ENCODE measurements at regions of chr5 and their contacts with region 1.

Region 1: DNA sequence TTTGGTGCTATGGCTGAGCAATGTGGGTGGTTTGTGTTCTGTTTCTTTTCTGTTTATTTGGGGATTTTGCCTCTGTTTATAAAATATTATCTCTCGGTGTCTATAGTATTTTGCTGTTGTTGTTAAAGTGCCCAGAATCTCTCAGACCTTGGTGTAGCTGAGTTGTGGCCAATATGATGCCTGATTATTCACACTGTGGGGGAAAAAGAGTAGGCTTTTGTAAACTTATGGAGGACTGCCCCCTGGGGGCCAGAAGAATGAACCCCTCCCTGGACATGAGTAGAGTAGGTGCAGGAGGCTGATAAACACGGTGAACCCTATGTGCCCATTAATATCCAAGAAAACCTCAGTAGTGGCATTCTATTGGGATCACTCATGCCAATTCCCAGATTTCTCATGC is 49.0 kb upstream of the DPYSL3 start:
- DNase-seq: peak; percentile 61
- H3K4me3 ChIP-seq: no peak overlapping the region
- H3K27ac ChIP-seq: no peak overlapping the region
- H3K27me3 ChIP-seq: no peaks in the 10 kb centered on the region
- CTCF ChIP-seq: peak; percentile 84

Region 2: DNA sequence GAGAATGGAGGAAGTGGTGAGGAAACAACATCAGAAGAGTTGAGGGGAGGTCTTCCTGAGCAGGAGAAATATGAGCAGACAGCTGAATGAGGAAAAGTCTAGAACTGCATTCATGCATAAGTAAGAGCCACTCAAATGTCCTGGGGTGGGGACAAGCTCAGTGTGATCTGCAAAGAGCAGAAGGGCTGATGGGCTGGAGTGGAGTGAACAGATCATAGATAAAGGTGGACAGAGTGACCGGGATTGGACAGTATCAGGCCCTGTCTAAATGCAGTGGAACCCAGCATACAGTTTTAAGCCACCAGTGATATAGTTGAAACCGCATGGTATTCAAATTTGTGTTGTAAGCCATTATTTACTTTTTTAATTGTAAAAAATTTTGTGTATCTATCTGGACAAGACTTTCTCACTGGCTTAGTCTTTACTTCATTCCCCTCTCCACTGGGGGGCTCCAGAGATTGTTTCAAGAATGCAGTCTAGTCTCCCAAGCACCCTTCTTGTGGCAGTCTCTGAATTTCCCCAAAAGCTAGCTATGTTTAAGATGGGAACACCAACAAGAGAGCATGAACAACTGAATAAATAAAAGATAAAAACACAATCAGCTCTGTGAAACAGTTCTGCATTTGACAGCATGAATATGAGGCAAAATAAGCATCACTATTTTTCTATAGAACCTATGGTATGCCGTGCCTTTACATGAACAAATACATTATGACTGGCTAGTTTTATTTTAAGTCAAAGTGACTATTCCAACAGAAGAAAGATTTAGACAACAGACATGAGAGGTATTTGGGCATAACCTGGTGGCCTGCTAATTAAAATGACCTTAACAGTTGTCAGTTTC is 334.7 kb before region 1 on chr5:
- CTCF ChIA-PET with region 1: interaction called, 31 read pairs
- POLR2A ChIA-PET with region 1: no interaction called
- DNase-seq: no peak
- H3K4me3 ChIP-seq: no peak overlapping the region
- H3K27ac ChIP-seq: no peak overlapping the region
- H3K27me3 ChIP-seq: peaks cover 2% of the 10 kb centered on the region
- CTCF ChIP-seq: peak; percentile 72

Region 3: GRCh38 chr5:147240266-147240985 is 318.4 kb before region 1 on chr5:
- CTCF ChIA-PET with region 1: no interaction called
- POLR2A ChIA-PET with region 1: no interaction called
- DNase-seq: no peak
- H3K4me3 ChIP-seq: no peak overlapping the region
- H3K27ac ChIP-seq: no peak overlapping the region
- H3K27me3 ChIP-seq: peaks cover 5% of the 10 kb centered on the region
- CTCF ChIP-seq: no peak

Region 4: DNA sequence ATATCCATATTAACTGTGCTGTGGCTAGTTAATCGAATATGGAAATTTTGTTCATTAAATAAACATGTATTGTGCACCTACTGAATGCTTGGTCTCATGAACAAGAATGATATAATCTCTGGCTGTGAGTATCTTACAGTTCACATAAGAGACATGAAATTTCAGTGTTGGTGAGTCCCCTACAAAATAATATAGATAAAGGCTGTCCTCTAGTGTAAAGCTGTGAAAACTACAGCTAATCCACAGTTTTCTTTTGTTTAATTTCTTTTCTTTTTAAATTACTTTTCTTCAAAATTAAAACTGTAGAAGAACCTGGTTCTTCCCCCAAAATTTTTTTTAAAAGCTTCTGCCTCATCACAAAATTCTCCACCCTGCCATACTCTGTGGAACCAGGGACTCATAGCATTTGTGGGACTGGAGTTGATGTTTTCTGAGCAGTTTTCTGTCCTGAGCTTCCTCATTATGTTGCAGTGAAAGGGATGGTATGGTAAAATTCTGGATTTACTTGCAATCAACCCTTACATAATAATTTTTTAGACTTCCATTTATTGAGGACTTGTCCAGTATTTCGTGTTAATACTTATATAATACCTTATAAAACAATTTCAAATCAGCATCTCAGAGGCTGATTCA is 189.0 kb before region 1 on chr5:
- CTCF ChIA-PET with region 1: interaction called, 12 read pairs
- POLR2A ChIA-PET with region 1: no interaction called
- DNase-seq: no peak
- H3K4me3 ChIP-seq: no peak overlapping the region
- H3K27ac ChIP-seq: no peak overlapping the region
- H3K27me3 ChIP-seq: peaks cover 2% of the 10 kb centered on the region
- CTCF ChIP-seq: peak; percentile 61

Region 5: DNA sequence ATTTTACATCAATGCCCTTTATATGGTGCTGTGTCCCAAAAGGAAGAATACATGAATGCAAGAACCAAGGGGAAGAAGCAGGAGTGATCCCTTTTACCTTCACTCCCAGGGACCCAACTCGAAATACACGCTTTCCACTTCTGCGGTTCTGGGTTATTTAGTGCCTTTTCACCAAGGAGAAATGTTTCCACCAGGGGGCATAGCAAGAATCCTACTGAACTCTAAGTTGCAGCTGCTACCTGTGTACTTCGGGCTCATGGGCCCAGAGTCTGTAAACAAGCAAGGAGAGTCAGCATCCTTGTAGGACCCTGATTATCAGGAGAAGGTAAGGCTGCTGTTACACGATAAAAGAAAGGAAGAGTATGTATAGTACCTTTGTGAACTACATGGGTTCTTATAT is 94.6 kb before region 1 on chr5:
- CTCF ChIA-PET with region 1: interaction called, 21 read pairs
- POLR2A ChIA-PET with region 1: no interaction called
- DNase-seq: no peak
- H3K4me3 ChIP-seq: no peak overlapping the region
- H3K27ac ChIP-seq: no peak overlapping the region
- H3K27me3 ChIP-seq: no peaks in the 10 kb centered on the region
- CTCF ChIP-seq: peak; percentile 54

Region 6: DNA sequence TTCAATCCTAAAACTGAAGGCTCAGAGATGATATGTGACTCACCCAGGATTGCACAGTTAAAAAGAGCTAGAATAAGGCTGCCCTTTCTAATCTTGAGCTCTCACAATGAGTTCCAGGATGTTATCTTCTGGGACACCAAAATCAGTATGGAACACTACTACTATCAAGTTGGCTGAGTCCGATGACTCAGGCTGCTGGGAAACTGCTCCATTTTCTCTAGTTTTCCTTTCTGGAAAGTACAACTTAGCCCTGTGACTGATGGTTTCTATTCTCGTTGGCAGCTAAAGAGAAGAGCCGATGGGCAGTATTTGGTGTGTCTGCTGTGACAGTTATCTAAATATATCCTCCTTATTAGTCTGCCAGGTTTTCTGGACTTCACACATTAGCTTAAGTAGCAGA is 11.1 kb before region 1 on chr5:
- CTCF ChIA-PET with region 1: interaction called, 18 read pairs
- POLR2A ChIA-PET with region 1: no interaction called
- DNase-seq: no peak
- H3K4me3 ChIP-seq: no peak overlapping the region
- H3K27ac ChIP-seq: no peak overlapping the region
- H3K27me3 ChIP-seq: no peaks in the 10 kb centered on the region
- CTCF ChIP-seq: no peak